CD8-positive, alpha-beta memory T cell (primary cell): ENCODE measurements at regions of chr15 and their contacts with region 1.

Region 1: DNA sequence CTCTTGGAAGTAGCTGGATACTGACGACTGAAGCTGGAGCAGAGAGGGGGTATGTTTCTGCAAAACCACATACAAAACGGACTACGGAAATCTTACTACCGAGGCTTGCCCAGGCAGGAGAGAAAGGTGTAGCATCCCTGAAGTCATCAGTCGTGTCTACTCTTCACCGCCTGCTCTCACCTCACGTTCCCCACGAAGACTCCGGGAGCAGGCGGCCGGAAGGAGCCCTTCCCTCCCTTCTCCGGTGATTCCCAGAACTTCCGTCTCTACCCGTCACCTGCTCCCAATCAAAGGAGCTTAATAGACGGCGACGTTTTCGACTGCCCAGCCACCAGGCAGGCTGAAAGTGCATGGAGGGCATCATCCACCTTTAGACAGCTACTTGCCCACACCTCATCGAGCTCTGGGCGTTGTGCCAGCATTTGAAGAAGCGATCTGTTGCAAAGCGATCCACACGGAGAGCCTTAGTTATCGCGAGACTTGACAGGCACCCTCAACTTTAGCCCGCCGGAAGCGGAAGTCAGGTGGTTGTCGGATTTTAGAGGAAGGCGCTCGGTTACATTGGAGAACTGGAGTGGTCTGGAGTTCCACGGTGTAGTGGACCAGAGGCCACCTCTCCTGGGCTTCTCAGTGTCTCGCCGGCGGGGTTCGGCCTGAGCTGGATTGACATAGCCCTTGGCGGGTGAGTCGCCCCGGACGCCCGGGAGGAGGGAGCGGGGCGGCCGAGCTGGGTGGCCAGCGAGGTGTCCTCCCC is at the start of gene RAMAC:
- DNase-seq: peak; percentile 87 to 97 (median 91)
- H3K4me3 ChIP-seq: peak within 1 kb of the TSS; percentile 79
- H3K4me3 Mint-ChIP-seq: peak within 1 kb of the TSS; percentile 93 to 99 (median 99)
- H3K27ac ChIP-seq: peak within 1 kb of the TSS; percentile 66
- H3K27ac Mint-ChIP-seq: peak within 1 kb of the TSS; percentile 44 to 99 (median 96)
- H3K4me1 ChIP-seq: peaks cover 22% of the 10 kb centered on the region
- H3K4me1 Mint-ChIP-seq: peaks cover 26 to 39% (median 34%) of the 10 kb centered on the region in 3 donors
- H3K27me3 ChIP-seq: no peaks in the 10 kb centered on the region
- H3K27me3 Mint-ChIP-seq: peaks cover 0 to 5% of the 10 kb centered on the region in 2 donors
- total RNA-seq, gene RAMAC: 27.7 to 29.6 TPM

Region 2: GRCh38 chr15:82999905-83000671 is 14.2 kb after region 1 on chr15:
- CTCF ChIA-PET with region 1: interaction called, 12 read pairs
- POLR2A ChIA-PET with region 1: no interaction called
- DNase-seq: peak in 2 of 5 donors; percentile 45 to 53
- H3K4me3 ChIP-seq: peak overlapping the region; percentile 53
- H3K4me3 Mint-ChIP-seq: peak overlapping the region; percentile 24 to 85 (median 75)
- H3K27ac ChIP-seq: no peak overlapping the region
- H3K27ac Mint-ChIP-seq: peak overlapping the region; percentile 67 to 89 (median 85)
- H3K4me1 ChIP-seq: peaks cover 9% of the 10 kb centered on the region
- H3K4me1 Mint-ChIP-seq: peaks cover 7 to 13% (median 8%) of the 10 kb centered on the region in 3 donors
- H3K27me3 ChIP-seq: no peaks in the 10 kb centered on the region
- H3K27me3 Mint-ChIP-seq: peaks cover 0 to 2% of the 10 kb centered on the region in 2 donors